Activated naive CD4-positive, alpha-beta T cell treated with anti-CD3 and anti-CD28 coated beads, Interleukin-2, amount 10 ng/mL, durations not matched to agents 7 days and 5 days (primary cell): ENCODE measurements at regions of chr17 and their contacts with region 1.

Region 1: DNA sequence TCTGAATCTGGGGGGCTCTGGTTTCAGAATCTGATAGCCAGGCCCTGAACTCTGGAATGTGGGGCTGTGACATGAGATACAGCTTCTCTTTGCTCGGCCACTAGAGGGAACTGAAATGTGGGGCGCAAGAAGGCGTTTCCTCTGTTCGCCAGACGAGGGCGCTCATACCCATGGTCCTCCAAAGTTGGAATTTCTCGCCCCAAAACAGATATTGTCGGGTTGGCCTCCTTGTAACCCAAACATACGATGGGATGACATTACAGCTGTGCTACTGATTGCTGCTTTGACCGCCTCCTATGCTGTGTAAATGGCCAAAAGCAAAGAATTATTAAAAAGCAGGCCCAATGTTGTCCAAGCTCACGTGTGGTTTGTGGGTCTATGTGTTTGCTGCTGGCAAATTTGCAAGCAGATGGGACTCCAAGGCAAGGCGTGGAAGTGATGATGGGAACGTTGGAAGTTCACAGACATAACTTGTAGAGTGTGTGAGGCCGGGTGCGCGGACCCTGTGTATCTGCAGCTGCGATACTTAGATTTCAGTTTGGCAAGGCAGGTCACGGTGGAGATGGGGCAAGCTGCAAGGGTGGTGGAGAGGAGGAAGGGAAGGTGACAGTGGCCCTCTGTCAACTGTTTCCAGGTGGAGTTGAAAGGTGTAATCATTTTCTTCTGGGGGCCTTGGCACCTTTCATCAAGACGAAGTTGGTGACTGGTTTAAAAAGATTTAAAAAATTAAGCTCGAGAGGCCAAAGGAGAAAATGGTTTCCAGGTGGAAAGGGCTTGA is 13.0 kb upstream of the MSI2 start:
- DNase-seq: peak; percentile 82
- H3K4me3 Mint-ChIP-seq: no peak overlapping the region
- H3K27ac Mint-ChIP-seq: no peak overlapping the region
- H3K4me1 Mint-ChIP-seq: peaks cover 7% of the 10 kb centered on the region
- H3K27me3 Mint-ChIP-seq: peaks cover 47% of the 10 kb centered on the region

Region 2: DNA sequence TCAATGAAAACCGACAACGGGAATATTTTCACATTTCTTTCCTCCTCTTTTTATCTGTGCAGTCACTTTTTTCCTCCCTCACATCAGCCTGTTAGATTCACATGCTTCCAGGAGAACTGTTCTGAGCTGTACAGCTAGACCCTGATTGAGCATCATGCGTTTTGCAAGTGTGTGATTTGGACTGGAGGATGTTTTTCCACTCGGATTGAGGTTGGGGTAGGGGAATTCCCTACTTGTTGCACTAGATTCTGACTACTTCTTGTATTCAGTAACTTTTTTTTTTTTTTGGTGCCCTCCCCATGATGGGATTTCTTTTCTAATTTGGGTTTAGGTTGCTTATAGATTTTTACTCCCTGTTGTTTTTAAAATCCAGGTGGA is 17.7 kb after region 1 on chr17:
- CTCF ChIA-PET with region 1: interaction called, 15 read pairs
- DNase-seq: no peak
- H3K4me3 Mint-ChIP-seq: no peak overlapping the region
- H3K27ac Mint-ChIP-seq: no peak overlapping the region
- H3K4me1 Mint-ChIP-seq: peaks cover 60% of the 10 kb centered on the region
- H3K27me3 Mint-ChIP-seq: no peaks in the 10 kb centered on the region

Region 3: GRCh38 chr17:57422574-57423164 is 179.3 kb after region 1 on chr17:
- CTCF ChIA-PET with region 1: interaction called, 14 read pairs
- DNase-seq: no peak
- H3K4me3 Mint-ChIP-seq: no peak overlapping the region
- H3K27ac Mint-ChIP-seq: peak overlapping the region; percentile 33
- H3K4me1 Mint-ChIP-seq: peaks cover 19% of the 10 kb centered on the region
- H3K27me3 Mint-ChIP-seq: no peaks in the 10 kb centered on the region

Region 4: DNA sequence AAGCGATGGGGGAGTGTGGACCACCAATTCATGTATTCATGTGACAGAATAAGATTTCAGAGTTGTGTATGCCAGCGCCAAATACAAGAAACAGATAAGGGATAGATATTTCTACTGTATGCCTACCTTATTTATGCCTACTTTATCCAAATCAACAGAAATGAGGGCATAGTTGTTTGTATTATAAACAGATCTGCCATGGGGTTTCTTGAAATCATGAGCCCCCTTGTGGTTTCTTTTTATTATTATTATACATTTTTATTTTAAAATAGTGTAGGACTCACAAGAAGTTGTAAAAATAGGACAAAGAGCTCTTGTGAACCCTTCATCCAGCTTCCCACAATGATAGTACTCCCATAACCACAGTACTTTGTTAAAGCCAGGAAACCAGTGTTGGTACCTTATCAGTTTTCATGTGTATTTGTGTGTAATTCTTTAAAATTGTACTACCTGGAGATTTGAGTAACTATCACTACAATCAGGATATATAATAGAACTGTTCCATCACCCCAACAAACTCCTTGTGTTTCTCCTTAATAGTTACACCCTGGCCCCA is 272.4 kb after region 1 on chr17:
- CTCF ChIA-PET with region 1: interaction called, 25 read pairs
- DNase-seq: no peak
- H3K4me3 Mint-ChIP-seq: no peak overlapping the region
- H3K27ac Mint-ChIP-seq: no peak overlapping the region
- H3K4me1 Mint-ChIP-seq: no peaks in the 10 kb centered on the region
- H3K27me3 Mint-ChIP-seq: no peaks in the 10 kb centered on the region

Region 5: GRCh38 chr17:57739402-57740392 is 496.3 kb after region 1 on chr17:
- CTCF ChIA-PET with region 1: interaction called, 14 read pairs
- DNase-seq: no peak
- H3K4me3 Mint-ChIP-seq: no peak overlapping the region
- H3K27ac Mint-ChIP-seq: no peak overlapping the region
- H3K4me1 Mint-ChIP-seq: peaks cover 5% of the 10 kb centered on the region
- H3K27me3 Mint-ChIP-seq: peaks cover 54% of the 10 kb centered on the region

Region 6: GRCh38 chr17:57783106-57783742 is 539.9 kb after region 1 on chr17:
- CTCF ChIA-PET with region 1: interaction called, 16 read pairs
- DNase-seq: peak; percentile 87
- H3K4me3 Mint-ChIP-seq: no peak overlapping the region
- H3K27ac Mint-ChIP-seq: no peak overlapping the region
- H3K4me1 Mint-ChIP-seq: peaks cover 4% of the 10 kb centered on the region
- H3K27me3 Mint-ChIP-seq: peaks cover 42% of the 10 kb centered on the region